ENCODE measurements at regions of chr1 and their contacts with region 1.

Region 1: DNA sequence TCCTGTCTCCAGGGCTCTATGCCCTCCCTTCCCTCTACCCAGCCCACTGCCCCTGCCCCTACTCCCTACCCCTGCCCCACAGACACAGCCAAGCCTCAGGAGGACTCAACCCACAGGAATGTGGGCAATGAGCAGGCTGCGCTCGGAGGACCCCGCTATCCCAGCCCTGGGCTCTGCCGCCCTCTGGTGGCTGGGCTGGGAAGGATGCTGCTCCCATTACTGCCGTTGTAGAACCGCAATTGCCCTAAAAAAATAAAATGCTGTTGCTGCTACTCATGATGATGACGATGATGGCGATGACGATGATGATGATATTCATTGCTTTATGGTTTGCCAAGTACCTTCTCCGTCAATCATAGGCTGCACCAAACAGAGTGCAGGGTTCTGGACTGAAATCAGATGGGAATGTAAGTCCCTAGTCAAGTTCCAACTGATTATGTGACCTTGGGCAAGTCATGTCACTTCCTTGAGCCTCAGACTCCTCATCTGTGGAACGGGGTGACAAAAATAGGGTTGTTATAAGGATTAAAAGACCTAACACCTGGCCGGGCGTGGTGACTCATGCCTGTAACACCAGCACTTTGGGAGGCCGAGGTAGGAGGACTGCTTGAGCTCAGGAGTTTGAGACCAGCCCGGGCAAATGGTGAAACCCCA is 24.6 kb downstream of the ARHGEF19 start:
- DNase-seq: peak; percentile 89
- H3K4me3 ChIP-seq: no peak overlapping the region
- H3K27ac ChIP-seq: peak overlapping the region; percentile 58
- H3K4me1 ChIP-seq: peaks cover 54% of the 10 kb centered on the region
- H3K27me3 ChIP-seq: no peaks in the 10 kb centered on the region
- CTCF ChIP-seq: peak; percentile 85 to 97

Region 2: DNA sequence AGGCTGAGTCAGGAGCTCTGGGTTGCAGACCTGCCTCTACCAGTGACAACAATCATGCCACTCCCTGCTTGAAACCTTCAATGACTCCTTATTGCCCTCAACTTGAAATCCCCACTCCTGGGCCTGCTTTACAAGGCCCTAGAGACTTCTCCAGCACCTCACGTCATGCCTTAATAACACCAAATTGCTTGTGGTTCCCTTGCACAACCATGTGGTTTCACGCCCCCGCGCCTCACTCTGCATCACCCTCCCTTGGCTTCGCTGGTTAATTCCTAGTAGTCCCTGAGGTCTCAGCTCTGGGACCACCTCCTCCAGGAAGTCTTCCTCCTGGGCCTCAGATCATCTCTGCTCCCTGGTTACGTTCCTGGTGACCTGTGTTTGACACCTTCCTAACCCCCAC is 65.0 kb before region 1 on chr1:
- CTCF ChIA-PET with region 1: interaction called, 3 read pairs
- dilution Hi-C with region 1: loop called (anchors 5 kb)
- in situ Hi-C with region 1: no loop called
- intact Hi-C with region 1: no loop called
- DNase-seq: peak; percentile 97
- H3K4me3 ChIP-seq: no peak overlapping the region
- H3K27ac ChIP-seq: peak overlapping the region; percentile 43
- H3K4me1 ChIP-seq: peaks cover 43% of the 10 kb centered on the region
- H3K27me3 ChIP-seq: no peaks in the 10 kb centered on the region
- CTCF ChIP-seq: no peak

Region 3: GRCh38 chr1:16146279-16147155 is 41.4 kb before region 1 on chr1:
- CTCF ChIA-PET with region 1: no interaction called
- dilution Hi-C with region 1: no loop called
- in situ Hi-C with region 1: loop called (anchors 5 kb)
- intact Hi-C with region 1: loop called (anchors 1 kb)
- DNase-seq: peak; percentile 72
- H3K4me3 ChIP-seq: peak overlapping the region; percentile 10 to 35 (median 11)
- H3K27ac ChIP-seq: peak overlapping the region; percentile 66
- H3K4me1 ChIP-seq: peaks cover 91% of the 10 kb centered on the region
- H3K27me3 ChIP-seq: no peaks in the 10 kb centered on the region
- CTCF ChIP-seq: no peak

Region 4: DNA sequence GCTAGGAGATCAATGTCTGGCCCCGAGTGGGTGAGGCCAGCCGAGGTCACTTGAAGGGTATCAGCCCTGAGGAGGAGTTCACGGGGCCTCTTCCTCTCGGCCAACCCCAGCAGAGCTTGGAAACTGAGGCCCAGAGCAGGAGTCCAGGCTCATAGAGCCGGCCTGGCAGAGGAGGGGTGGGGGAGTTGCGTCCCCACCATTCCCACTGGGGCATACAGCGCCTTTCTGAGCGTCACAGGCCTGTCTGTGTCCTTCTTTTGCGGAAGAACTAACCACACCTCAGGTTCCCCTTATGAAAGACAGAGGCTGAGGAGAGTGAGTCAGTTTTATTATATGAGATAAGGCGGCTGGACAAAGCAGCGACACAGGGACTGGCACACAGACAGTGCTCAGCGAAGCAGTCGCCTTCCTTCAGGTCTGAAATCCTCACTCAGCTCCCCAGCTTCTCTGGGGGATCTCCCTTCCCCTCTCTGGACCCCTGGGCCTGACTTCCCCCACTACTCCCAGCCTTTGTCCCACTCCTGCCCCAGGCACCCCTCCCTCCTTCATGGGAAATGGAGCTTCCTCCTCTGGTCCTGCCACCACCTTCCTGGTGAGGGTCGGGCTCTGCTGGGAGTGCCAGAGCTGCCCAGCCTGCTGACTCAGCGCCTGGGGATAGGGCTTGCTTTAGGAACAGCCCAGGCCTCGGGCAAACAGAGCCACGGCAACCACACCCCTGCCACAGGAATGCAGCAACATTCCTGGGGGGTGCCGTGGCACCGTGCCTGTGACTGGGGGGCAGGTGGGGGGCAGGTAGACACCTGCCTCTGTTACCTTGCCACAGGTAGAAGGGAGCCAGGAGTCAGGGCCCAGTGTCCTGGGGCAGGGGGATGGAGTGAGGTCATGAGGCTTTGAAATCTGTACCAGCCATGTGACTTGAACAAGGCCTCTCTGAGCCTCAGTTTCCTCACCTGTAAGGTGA is 14.6 kb before region 1 on chr1:
- CTCF ChIA-PET with region 1: no interaction called
- dilution Hi-C with region 1: no loop called
- in situ Hi-C with region 1: no loop called
- intact Hi-C with region 1: loop called (anchors 2 kb)
- DNase-seq: peak; percentile 97
- H3K4me3 ChIP-seq: no peak overlapping the region
- H3K27ac ChIP-seq: peak overlapping the region; percentile 97
- H3K4me1 ChIP-seq: peaks cover 52% of the 10 kb centered on the region
- H3K27me3 ChIP-seq: no peaks in the 10 kb centered on the region
- CTCF ChIP-seq: no peak

Region 5: GRCh38 chr1:16230744-16231143 is 42.9 kb after region 1 on chr1:
- CTCF ChIA-PET with region 1: no interaction called
- dilution Hi-C with region 1: no loop called
- in situ Hi-C with region 1: no loop called
- intact Hi-C with region 1: no loop called
- DNase-seq: no peak
- H3K4me3 ChIP-seq: no peak overlapping the region
- H3K27ac ChIP-seq: no peak overlapping the region
- H3K4me1 ChIP-seq: peaks cover 6% of the 10 kb centered on the region
- H3K27me3 ChIP-seq: no peaks in the 10 kb centered on the region
- CTCF ChIP-seq: no peak

Region 6: DNA sequence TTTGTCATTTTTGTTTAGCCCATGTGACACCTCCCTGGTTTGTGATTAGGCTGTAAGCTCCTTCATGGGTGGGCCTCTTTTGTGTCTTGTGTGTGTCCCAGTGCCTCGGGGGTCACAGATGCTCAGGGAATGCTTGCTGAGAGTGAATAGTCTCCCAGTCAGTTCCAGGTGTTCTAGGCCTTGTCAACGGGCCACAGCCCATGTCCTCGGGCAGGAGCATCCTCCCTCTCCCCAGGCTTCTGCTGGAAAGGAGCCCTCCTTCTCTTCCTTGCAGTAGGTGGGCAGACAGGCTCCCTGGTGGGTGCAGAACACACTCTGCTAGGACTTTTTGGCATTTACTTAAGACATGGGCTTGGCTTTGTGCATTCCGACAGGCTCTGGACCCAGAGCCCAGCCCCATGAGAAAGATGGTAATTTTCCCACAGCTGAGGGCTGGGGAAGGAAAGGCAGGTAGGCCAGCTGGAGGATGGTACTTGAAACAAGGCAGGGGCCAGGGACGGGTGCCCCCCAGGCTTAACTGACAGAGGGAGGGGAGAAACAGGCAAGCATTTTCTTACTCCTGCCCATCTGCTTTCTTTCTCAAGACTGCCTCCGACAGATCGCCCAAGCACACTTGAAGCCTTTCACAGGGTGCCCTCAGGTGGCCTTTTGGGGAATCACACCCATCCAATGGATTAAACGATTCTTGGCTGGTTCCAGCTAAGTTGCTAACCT is 56.2 kb after region 1 on chr1:
- CTCF ChIA-PET with region 1: no interaction called
- dilution Hi-C with region 1: loop called (anchors 10 kb)
- in situ Hi-C with region 1: no loop called
- intact Hi-C with region 1: loop called (anchors 1 kb)
- DNase-seq: peak; percentile 66
- H3K4me3 ChIP-seq: no peak overlapping the region
- H3K27ac ChIP-seq: no peak overlapping the region
- H3K4me1 ChIP-seq: peaks cover 12% of the 10 kb centered on the region
- H3K27me3 ChIP-seq: no peaks in the 10 kb centered on the region
- CTCF ChIP-seq: peak; percentile 86

Measured in mammary epithelial cell (primary cell).